SK-N-SH (cell line): ENCODE measurements at regions of chr3 and their contacts with region 1.

Region 1: DNA sequence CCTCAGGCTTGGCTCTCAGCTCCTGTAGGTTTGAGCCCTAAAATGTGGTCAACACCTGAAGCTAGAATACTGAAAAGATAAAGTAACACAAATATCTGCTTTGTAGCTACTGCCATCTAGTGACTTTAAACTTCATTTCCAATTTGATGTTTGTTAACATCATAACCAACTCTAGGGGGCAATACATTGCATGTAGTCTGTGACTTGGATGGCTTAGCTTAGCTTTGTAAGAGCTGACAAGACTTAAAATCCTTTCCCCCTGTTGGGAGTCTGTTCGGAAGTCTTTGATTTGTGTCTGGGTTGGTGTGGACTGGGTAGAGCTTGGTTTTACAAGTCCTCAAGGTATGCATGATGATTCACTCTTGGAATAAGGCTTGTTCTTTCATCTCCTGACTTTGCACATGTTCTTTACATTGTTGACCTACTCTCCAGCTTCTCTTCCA is 51.7 kb downstream of the SCN11A start:
- DNase-seq: peak; percentile 60
- H3K4me3 ChIP-seq: peak overlapping the region in 1 of 2 experiments; percentile 36; a peak in 1 of 4 replicates
- H3K27ac ChIP-seq: no peak overlapping the region
- H3K4me1 ChIP-seq: no peaks in the 10 kb centered on the region
- H3K27me3 ChIP-seq: no peaks in the 10 kb centered on the region
- CTCF ChIP-seq: peak; percentile 88
- EP300 ChIP-seq: no peak
- RAD21 ChIP-seq: peak; percentile 86

Region 2: DNA sequence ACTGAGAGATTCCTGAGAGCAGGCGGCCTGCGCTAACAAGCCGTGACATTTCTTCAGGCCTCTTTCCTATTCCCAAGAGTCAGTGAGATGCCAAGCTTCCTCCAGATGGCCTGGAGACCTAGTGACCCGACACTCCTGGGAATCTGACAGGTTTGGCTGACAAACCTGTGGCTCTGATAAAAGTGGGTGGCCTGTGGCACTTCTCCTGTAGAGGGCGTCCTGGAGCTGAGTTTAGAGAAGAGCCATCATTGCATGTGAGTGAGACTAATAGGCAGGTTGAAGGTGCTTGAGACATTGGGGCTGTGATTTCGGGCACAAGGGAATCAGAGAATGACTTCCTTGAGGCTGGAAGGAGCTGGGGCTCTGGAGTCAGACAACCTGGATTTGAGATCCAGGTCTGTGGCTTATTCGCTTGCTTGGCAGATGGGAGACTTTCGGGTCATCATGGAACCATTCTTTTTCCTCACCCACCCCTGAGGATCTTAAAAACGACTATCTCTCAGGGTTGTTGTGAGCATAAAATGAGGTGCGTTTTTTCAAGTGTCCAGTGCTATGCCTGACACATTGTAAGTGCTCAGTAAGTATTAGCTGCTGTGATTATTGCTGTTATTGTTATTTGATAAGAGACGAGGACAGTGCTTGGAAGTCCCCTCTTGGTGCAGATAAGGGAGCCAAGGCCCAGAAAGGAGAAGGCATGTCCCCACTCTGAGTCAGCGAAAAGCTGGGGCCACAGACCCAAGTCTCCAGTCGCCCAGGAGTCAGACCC is 261.2 kb before region 1 on chr3:
- CTCF ChIA-PET with region 1: interaction called, 23 read pairs
- POLR2A ChIA-PET with region 1: no interaction called
- DNase-seq: peak; percentile 70
- H3K4me3 ChIP-seq: no peak overlapping the region
- H3K27ac ChIP-seq: no peak overlapping the region
- H3K4me1 ChIP-seq: no peaks in the 10 kb centered on the region
- H3K27me3 ChIP-seq: no peaks in the 10 kb centered on the region
- CTCF ChIP-seq: peak; percentile 78
- EP300 ChIP-seq: no peak
- RAD21 ChIP-seq: peak; percentile 80

Region 3: DNA sequence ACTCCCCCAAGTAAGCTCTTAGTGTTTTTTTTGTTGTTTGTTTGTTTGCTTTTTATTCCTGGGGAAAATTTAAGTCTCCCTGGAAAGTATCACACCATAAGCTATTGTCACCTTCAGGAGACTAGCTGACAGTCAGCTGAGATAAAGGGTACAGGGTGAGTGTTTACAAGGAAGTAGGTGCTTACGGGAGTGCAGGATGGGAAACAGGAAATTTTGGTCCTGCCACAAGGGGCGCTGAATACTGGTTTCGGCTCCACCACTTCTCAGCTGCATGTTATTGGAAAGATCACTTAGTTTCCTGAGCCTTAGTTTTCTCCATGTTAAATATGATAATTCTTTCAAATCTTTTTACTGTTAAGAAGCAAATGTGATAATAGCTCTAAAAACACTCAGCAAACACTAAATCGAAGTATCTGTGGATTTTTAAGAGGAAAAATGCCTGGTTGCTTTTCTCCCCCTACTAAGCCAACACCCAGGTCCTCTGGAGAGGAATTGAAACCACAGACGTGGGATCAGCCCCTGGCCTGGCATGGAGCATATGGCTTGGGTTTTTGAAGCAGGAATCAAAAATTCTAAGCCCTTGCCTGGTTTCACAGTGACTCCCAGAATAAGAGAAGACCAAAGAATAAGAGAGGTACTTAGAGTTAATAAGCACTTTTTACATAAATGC is 38.9 kb before region 1 on chr3:
- CTCF ChIA-PET with region 1: interaction called, 19 read pairs
- POLR2A ChIA-PET with region 1: no interaction called
- DNase-seq: peak; percentile 56
- H3K4me3 ChIP-seq: no peak overlapping the region; a peak in 1 of 4 replicates
- H3K27ac ChIP-seq: no peak overlapping the region
- H3K4me1 ChIP-seq: peaks cover 0 to 9% of the 10 kb centered on the region in 2 experiments; a peak in 1 of 4 replicates
- H3K27me3 ChIP-seq: no peaks in the 10 kb centered on the region
- CTCF ChIP-seq: peak; percentile 72
- EP300 ChIP-seq: no peak
- RAD21 ChIP-seq: peak; percentile 42

Region 4: DNA sequence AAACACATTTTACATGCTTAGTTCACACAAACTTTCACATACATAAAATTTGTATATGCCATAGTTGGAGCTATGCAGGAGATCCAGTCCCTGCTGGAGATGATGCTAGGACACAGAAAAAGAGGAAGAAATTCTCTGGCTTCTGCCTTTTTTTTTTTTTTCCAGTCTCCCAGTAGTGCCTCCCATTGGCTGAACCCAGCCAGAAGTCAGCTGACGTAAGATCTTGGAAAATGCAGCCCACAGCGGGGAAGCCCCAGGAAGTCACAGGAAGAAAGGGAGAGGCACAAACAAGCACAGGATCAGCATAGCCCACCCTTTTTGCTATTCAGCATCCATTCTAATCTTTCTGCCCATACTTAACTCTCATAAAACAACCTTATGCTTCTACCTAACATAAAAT is 13.3 kb after region 1 on chr3:
- CTCF ChIA-PET with region 1: interaction called, 45 read pairs
- POLR2A ChIA-PET with region 1: no interaction called
- DNase-seq: no peak
- H3K4me3 ChIP-seq: no peak overlapping the region
- H3K27ac ChIP-seq: no peak overlapping the region
- H3K4me1 ChIP-seq: no peaks in the 10 kb centered on the region
- H3K27me3 ChIP-seq: no peaks in the 10 kb centered on the region
- CTCF ChIP-seq: no peak
- EP300 ChIP-seq: no peak
- RAD21 ChIP-seq: no peak

Region 5: DNA sequence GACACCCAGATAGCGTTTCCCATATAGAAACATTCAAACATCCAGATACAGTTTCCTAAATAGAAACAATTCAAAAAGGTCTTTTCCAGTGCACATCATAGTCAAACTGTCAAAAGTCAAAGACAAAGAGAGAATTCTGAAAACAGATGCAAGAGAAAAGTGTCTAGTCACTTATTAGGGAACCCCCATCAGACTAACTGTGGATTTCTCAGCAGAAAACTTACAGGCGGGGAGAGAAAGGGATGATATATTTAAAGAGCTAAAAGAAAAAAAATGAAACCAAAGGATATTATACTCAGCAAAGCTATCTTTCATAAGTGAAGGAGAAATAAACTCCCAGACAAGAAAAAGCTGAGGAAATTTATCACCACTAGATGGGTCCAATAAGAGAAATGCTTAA is 302.1 kb after region 1 on chr3:
- CTCF ChIA-PET with region 1: no interaction called
- POLR2A ChIA-PET with region 1: no interaction called
- DNase-seq: no peak
- H3K4me3 ChIP-seq: no peak overlapping the region
- H3K27ac ChIP-seq: no peak overlapping the region
- H3K4me1 ChIP-seq: no peaks in the 10 kb centered on the region
- H3K27me3 ChIP-seq: no peaks in the 10 kb centered on the region
- CTCF ChIP-seq: no peak
- EP300 ChIP-seq: no peak
- RAD21 ChIP-seq: no peak